ENCODE measurements at regions of chr7 and their contacts with region 1.

Region 1: GRCh38 chr7:37181550-37181932 is 267.1 kb downstream of the ELMO1 start:
- DNase-seq: no peak
- H3K4me3 ChIP-seq: no peak overlapping the region
- H3K27ac ChIP-seq: no peak overlapping the region
- H3K4me1 ChIP-seq: peaks cover 0 to 2% of the 10 kb centered on the region in 2 experiments; a peak in 1 of 4 replicates
- H3K27me3 ChIP-seq: no peaks in the 10 kb centered on the region
- CTCF ChIP-seq: no peak
- EP300 ChIP-seq: no peak
- RAD21 ChIP-seq: no peak

Region 2: GRCh38 chr7:36468370-36469101 is 713.0 kb before region 1 on chr7:
- CTCF ChIA-PET with region 1: interaction called, 17 read pairs
- POLR2A ChIA-PET with region 1: no interaction called
- DNase-seq: no peak
- H3K4me3 ChIP-seq: no peak overlapping the region
- H3K27ac ChIP-seq: peak overlapping the region; percentile 45 to 55
- H3K4me1 ChIP-seq: peaks cover 12 to 14% of the 10 kb centered on the region in 2 experiments
- H3K27me3 ChIP-seq: no peaks in the 10 kb centered on the region
- CTCF ChIP-seq: no peak
- EP300 ChIP-seq: peak in 1 of 2 experiments; percentile 26; a peak in 1 of 4 replicates
- RAD21 ChIP-seq: no peak

Region 3: DNA sequence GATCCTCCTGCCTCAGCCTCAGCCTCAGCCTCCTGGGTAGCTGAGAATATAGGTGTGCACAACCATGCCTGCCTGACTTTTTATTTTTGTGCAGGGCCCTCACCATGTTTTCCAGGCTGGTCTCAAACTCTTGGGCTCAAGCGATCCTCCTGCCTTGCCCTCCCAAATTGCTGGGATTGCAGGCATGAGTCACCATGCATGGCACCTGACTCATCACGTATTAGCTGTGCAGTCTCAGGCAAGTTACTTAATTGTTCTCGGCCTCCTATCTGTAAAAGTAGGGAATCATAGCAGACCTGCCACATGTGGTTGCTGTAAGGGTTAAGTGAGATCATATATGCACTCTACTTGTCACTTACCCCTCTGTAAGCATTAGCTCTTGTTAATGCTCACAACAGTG is 674.7 kb before region 1 on chr7:
- CTCF ChIA-PET with region 1: interaction called, 12 read pairs
- POLR2A ChIA-PET with region 1: no interaction called
- DNase-seq: no peak
- H3K4me3 ChIP-seq: no peak overlapping the region
- H3K27ac ChIP-seq: no peak overlapping the region
- H3K4me1 ChIP-seq: peaks cover 0 to 9% of the 10 kb centered on the region in 2 experiments; a peak in 1 of 4 replicates
- H3K27me3 ChIP-seq: no peaks in the 10 kb centered on the region; the same call in 1 of the 2 replicates
- CTCF ChIP-seq: no peak
- EP300 ChIP-seq: no peak
- RAD21 ChIP-seq: no peak

Region 4: DNA sequence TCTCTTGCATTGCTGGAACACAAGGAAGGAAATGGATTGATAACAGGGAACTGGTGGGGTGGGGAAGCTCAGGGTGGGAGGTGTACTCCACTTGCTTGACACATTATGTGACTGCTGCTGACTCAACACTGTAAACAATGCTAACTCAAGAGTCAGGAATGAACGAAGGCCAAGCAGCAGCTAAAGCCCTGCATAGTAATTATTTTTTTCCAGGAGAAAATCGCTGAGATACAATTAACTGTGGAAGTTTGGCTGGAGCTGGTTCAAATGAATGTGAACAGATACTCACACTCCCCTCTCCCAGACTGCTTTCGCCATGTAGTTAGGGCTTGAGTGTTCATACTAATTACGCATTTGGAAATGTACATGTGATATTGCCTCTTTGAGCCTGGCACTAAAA is 286.3 kb before region 1 on chr7:
- CTCF ChIA-PET with region 1: interaction called, 12 read pairs
- POLR2A ChIA-PET with region 1: no interaction called
- DNase-seq: no peak
- H3K4me3 ChIP-seq: no peak overlapping the region
- H3K27ac ChIP-seq: peak overlapping the region in 1 of 2 experiments; percentile 40; a peak in 2 of 4 replicates
- H3K4me1 ChIP-seq: peaks cover 0 to 19% of the 10 kb centered on the region in 2 experiments; a peak in 2 of 4 replicates
- H3K27me3 ChIP-seq: no peaks in the 10 kb centered on the region
- CTCF ChIP-seq: no peak
- EP300 ChIP-seq: no peak
- RAD21 ChIP-seq: no peak

Region 5: DNA sequence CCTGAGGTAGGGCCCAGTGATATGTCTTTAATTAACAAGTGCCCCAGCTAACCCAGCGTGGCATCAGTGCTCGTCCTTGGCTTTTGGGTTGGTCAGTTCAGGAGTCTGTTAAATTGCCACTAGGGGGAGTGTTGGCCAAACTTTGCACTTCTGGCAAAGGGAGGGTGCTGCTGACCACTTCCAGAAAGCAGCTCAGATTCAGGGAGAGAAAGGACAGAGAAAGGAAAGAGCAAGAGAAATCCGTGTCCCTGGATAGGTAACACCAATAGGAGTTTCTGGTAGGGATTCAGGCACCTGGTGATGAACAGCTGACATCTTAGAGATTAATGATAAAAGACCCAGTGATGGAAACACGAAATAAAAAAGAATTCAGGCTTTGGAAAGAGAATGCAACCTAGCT is 214.2 kb before region 1 on chr7:
- CTCF ChIA-PET with region 1: interaction called, 184 read pairs
- POLR2A ChIA-PET with region 1: interaction called, 12 read pairs
- DNase-seq: peak; percentile 79
- H3K4me3 ChIP-seq: no peak overlapping the region
- H3K27ac ChIP-seq: peak overlapping the region in 1 of 2 experiments; percentile 99; a peak in 2 of 4 replicates
- H3K4me1 ChIP-seq: peaks cover 0 to 30% of the 10 kb centered on the region in 2 experiments; a peak in 2 of 4 replicates
- H3K27me3 ChIP-seq: no peaks in the 10 kb centered on the region
- CTCF ChIP-seq: peak; percentile 96
- EP300 ChIP-seq: peak in 1 of 2 experiments; percentile 25; a peak in 1 of 4 replicates
- RAD21 ChIP-seq: peak; percentile 95

Region 6: GRCh38 chr7:37031571-37032257 is 149.8 kb before region 1 on chr7:
- CTCF ChIA-PET with region 1: interaction called, 37 read pairs
- POLR2A ChIA-PET with region 1: no interaction called
- DNase-seq: no peak
- H3K4me3 ChIP-seq: no peak overlapping the region
- H3K27ac ChIP-seq: peak overlapping the region; percentile 36 to 64; a peak in 3 of 4 replicates
- H3K4me1 ChIP-seq: peaks cover 14 to 19% of the 10 kb centered on the region in 2 experiments
- H3K27me3 ChIP-seq: no peaks in the 10 kb centered on the region
- CTCF ChIP-seq: no peak
- EP300 ChIP-seq: peak in 1 of 2 experiments; percentile 90; a peak in 1 of 4 replicates
- RAD21 ChIP-seq: no peak

Region 7: DNA sequence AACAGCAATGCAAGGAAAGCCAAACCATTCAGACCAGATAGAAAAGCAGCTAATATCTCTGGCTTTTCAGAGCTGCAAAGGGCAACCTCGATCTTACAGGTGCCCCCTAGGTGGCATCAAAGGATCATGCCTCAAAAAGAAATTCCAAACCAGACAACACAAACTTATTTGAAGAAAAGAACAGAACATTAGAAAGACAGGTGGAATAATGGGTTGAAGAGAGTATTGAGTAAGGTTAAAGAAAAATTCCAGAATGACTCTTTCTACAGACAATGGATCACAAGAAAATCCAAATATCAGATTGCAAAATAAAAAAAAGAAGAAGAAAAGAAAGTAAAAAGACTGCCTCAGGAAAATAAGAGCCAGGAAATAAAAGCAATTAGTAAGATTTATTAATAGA is 53.4 kb after region 1 on chr7:
- CTCF ChIA-PET with region 1: no interaction called
- POLR2A ChIA-PET with region 1: no interaction called
- DNase-seq: peak; percentile 54
- H3K4me3 ChIP-seq: no peak overlapping the region
- H3K27ac ChIP-seq: no peak overlapping the region
- H3K4me1 ChIP-seq: peaks cover 0 to 13% of the 10 kb centered on the region in 2 experiments; a peak in 2 of 4 replicates
- H3K27me3 ChIP-seq: no peaks in the 10 kb centered on the region
- CTCF ChIP-seq: peak; percentile 46
- EP300 ChIP-seq: no peak
- RAD21 ChIP-seq: peak; percentile 96

Measured in SK-N-SH (cell line).